OCI-LY7 (cell line): ENCODE measurements at regions of chr14 and their contacts with region 1.

Region 1: DNA sequence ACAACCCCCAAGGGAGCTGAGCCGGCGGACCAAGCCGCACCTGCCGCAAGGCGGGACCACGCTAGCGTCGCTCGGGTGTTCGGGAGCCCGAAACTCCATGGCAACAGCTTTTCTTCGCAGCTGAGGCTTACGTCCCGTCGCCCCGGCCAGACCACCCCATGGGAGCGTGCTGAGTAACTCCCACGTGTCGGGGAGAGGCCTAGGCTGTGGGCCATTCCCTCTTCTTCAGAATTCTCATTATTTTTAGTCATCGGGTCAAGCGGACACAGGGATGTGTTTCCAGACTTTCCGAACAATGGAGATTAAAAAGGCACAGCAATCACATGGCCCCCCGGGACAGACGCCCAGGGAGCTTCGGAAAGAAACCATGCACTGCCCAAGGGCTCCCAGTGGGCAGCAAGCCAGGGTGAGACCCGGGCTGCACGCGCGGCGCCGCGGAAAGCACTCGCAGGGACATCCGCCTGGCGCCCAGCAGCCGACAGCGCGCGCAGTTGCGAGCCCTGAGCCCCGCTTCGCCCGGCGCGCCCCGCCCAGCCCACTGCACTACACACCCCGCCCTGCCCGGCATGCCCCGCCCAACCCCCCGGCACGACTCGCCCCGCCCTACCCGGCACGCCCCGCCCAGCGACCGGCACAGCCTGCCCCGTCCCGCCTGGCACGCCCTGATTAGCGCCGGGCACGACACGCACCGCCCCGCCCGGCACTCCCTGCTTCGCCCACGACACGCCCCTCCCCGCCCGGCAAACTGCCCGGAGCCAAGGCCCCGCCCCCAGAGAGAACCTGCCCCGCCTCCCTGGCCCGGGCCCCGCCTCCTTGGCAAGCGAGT is 422 bp upstream of the AK7 start:
- DNase-seq: peak; percentile 94
- H3K4me3 ChIP-seq: peak overlapping the region; percentile 75
- H3K27ac ChIP-seq: peak overlapping the region; percentile 26
- H3K4me1 ChIP-seq: peaks cover 16% of the 10 kb centered on the region
- CTCF ChIP-seq: no peak

Region 2: GRCh38 chr14:96362965-96363756 is 28.3 kb before region 1 on chr14 and contains the starts of genes ATG2B and GSKIP:
- CTCF ChIA-PET with region 1: no interaction called
- POLR2A ChIA-PET with region 1: no interaction called
- intact Hi-C with region 1: loop called (anchors 1 kb)
- DNase-seq: peak; percentile 98
- H3K4me3 ChIP-seq: peak within 1 kb of the TSS; percentile 93
- H3K27ac ChIP-seq: peak within 1 kb of the TSS; percentile 61
- H3K4me1 ChIP-seq: peaks cover 36% of the 10 kb centered on the region
- CTCF ChIP-seq: no peak
- total RNA-seq, gene ATG2B: 15.7 and 16.7 TPM in 2 replicates
- total RNA-seq, gene GSKIP: 7.7 and 12.5 TPM in 2 replicates

Region 3: GRCh38 chr14:96380735-96381134 is 10.8 kb before region 1 on chr14:
- CTCF ChIA-PET with region 1: no interaction called
- POLR2A ChIA-PET with region 1: interaction called, 11 read pairs
- intact Hi-C with region 1: no loop called
- DNase-seq: peak; percentile 19
- H3K4me3 ChIP-seq: no peak overlapping the region
- H3K27ac ChIP-seq: no peak overlapping the region
- H3K4me1 ChIP-seq: peaks cover 16% of the 10 kb centered on the region
- CTCF ChIP-seq: no peak

Region 4: DNA sequence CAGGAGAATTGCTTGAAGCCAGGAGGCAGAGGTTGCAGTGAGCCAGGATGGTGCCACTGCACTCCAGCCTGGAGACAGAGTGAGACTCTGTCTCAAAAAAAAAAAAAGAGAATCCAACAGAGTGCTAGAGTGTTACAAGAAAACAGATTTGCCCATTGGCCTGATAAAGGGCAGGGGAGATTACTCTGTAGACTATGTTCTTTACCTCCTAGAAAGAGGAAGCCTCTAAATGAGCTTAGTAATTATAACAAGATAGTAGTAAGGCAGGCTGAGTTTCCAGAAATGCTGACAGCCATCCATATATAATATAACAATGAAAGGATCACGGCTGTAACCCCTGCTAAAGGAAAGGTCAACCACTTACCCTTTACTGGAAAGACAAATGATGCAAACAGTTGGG is 24.8 kb after region 1 on chr14:
- CTCF ChIA-PET with region 1: no interaction called
- POLR2A ChIA-PET with region 1: no interaction called
- intact Hi-C with region 1: no loop called
- DNase-seq: no peak
- H3K4me3 ChIP-seq: no peak overlapping the region
- H3K27ac ChIP-seq: no peak overlapping the region
- H3K4me1 ChIP-seq: no peaks in the 10 kb centered on the region
- CTCF ChIP-seq: no peak